ENCODE measurements at regions of chr13 and their contacts with region 1.

Region 1: DNA sequence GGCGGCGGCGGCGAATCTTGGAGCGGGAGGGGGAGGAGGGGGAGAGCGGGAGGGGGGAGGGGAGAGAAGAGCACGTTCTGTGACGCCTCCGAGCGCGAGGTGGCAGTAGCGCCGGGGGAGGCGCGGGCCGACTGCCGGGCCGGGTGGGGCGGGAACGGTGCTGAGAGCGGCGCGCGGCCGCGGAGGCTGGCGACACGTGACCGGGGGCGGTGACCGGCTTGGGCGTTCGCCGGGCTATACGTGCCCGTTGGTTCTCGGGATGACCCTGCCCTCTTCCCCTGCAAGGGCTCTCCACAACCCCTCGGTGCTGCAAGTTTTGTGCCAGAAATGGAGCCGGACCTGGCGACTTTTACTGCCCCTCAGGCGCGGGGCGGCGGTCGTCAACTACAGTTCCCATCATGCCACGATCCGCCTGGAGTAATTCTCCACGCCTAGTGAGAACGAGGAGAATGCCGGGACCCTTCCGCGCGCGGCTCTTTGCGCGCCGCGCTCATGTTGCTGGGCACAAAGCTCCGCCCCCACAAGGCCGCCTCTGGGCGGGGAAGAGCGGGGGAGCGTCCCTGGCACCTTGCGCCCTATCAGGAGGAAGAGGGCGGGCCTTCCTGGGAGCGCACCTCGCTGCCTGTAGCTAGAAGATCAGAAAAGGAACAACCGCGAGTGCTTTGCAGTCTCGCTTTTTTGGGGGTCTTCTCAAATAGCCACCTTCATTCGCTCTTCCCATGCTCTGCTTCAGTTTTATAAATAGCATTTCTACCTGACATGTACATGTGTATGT is at the start of gene KPNA3:
- DNase-seq: peak; percentile 94 to 96 (median 95)
- H3K4me3 ChIP-seq: peak within 1 kb of the TSS; percentile 74 to 80
- H3K4me3 Mint-ChIP-seq: peak within 1 kb of the TSS; percentile 96 to 99 (median 97)
- H3K27ac ChIP-seq: peak within 1 kb of the TSS; percentile 74
- H3K27ac Mint-ChIP-seq: peak within 1 kb of the TSS; percentile 92 to 98 (median 98)
- H3K4me1 ChIP-seq: peaks cover 37% of the 10 kb centered on the region
- H3K4me1 Mint-ChIP-seq: peaks cover 22 to 42% (median 36%) of the 10 kb centered on the region in 4 donors
- H3K27me3 ChIP-seq: no peaks in the 10 kb centered on the region
- H3K27me3 Mint-ChIP-seq: peaks cover 0 to 5% of the 10 kb centered on the region in 2 donors
- total RNA-seq, gene KPNA3: 21.1 to 22.4 TPM

Region 2: DNA sequence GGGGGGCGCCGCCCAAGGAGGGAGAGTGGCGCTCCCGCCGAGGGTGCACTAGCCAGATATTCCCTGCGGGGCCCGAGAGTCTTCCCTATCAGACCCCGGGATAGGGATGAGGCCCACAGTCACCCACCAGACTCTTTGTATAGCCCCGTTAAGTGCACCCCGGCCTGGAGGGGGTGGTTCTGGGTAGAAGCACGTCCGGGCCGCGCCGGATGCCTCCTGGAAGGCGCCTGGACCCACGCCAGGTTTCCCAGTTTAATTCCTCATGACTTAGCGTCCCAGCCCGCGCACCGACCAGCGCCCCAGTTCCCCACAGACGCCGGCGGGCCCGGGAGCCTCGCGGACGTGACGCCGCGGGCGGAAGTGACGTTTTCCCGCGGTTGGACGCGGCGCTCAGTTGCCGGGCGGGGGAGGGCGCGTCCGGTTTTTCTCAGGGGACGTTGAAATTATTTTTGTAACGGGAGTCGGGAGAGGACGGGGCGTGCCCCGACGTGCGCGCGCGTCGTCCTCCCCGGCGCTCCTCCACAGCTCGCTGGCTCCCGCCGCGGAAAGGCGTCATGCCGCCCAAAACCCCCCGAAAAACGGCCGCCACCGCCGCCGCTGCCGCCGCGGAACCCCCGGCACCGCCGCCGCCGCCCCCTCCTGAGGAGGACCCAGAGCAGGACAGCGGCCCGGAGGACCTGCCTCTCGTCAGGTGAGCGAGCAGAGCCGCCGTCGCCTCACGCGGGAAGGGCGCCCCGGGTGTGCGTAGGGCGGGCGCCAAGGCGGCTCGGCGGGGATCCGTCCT is 1489.2 kb before region 1 on chr13 and contains the start of gene RB1:
- CTCF ChIA-PET with region 1: no interaction called
- POLR2A ChIA-PET with region 1: no interaction called
- intact Hi-C with region 1: loop called (anchors 5 kb)
- DNase-seq: peak; percentile 91 to 93 (median 92)
- H3K4me3 ChIP-seq: peak within 1 kb of the TSS; percentile 76 to 94
- H3K4me3 Mint-ChIP-seq: peak within 1 kb of the TSS; percentile 95 to 99 (median 97)
- H3K27ac ChIP-seq: peak within 1 kb of the TSS; percentile 96
- H3K27ac Mint-ChIP-seq: peak within 1 kb of the TSS; percentile 98 to 100 (median 99)
- H3K4me1 ChIP-seq: peaks cover 38% of the 10 kb centered on the region
- H3K4me1 Mint-ChIP-seq: peaks cover 21 to 41% (median 29%) of the 10 kb centered on the region in 4 donors
- H3K27me3 ChIP-seq: no peaks in the 10 kb centered on the region
- H3K27me3 Mint-ChIP-seq: no peaks in the 10 kb centered on the region
- total RNA-seq, gene RB1: 20.0 to 26.0 TPM

Region 3: GRCh38 chr13:49247643-49248621 is 544.8 kb before region 1 on chr13 and contains the start of gene CDADC1:
- CTCF ChIA-PET with region 1: no interaction called
- POLR2A ChIA-PET with region 1: no interaction called
- intact Hi-C with region 1: loop called (anchors 5 kb)
- DNase-seq: peak; percentile 77 to 87 (median 81)
- H3K4me3 ChIP-seq: peak within 1 kb of the TSS; percentile 86 to 89
- H3K4me3 Mint-ChIP-seq: peak within 1 kb of the TSS; percentile 94 to 99 (median 97)
- H3K27ac ChIP-seq: peak within 1 kb of the TSS; percentile 89
- H3K27ac Mint-ChIP-seq: peak within 1 kb of the TSS; percentile 95 to 99 (median 97)
- H3K4me1 ChIP-seq: peaks cover 48% of the 10 kb centered on the region
- H3K4me1 Mint-ChIP-seq: peaks cover 24 to 51% (median 38%) of the 10 kb centered on the region in 4 donors
- H3K27me3 ChIP-seq: no peaks in the 10 kb centered on the region
- H3K27me3 Mint-ChIP-seq: peaks cover 0 to 4% of the 10 kb centered on the region in 2 donors
- total RNA-seq, gene CDADC1: 14.7 to 15.9 TPM

Region 4: DNA sequence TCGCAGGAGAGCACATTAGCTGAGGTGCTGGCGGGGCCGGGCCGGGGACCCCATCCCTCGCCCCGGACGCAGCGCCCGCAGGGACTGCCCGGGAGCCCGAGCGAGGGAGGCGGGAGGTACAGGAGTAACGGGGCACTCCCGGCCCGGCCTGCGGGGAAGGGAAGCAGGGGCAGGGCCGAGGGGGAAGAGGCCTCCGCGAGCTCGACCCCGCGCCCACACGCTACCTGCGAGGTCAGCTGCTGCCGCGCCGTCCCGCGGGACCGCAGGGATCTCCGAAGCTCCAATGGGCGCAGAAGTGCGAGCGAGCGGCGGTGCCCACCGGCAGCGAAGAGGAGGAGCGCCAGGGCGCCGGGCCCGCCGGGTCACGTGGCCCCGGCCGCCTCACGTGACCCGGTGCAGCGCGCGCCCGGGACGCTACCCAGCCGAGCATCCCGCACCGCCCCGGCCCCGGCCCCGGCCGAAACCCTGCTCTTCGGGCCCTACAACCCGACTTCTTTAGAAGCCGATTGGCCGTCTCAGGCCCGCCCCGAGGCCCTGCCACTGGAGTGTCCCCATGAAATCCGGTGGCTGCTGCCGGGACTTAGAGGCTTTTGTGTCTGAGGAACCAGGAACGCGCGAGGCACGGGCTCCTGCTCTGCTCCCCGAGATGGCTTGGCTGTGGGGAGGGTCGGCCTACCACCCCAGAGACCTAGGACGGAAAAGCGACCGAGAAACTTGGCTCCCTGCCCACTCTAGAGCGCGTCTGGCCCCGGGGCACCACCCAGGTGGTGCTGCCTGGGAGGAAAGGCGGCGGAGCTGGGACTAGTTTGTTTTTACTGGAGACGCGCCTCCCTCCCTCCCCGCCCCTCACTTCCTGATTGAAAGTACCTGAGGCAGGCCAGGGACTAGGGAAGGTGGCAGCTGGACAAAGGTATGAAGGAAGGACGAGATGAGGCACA is 207.2 kb before region 1 on chr13 and contains the start of gene RCBTB1:
- CTCF ChIA-PET with region 1: no interaction called
- POLR2A ChIA-PET with region 1: interaction called, 5 read pairs
- intact Hi-C with region 1: loop called (anchors 1 kb)
- DNase-seq: peak; percentile 66 to 77 (median 72)
- H3K4me3 ChIP-seq: peak within 1 kb of the TSS; percentile 64 to 76
- H3K4me3 Mint-ChIP-seq: peak within 1 kb of the TSS; percentile 88 to 99 (median 96)
- H3K27ac ChIP-seq: peak within 1 kb of the TSS; percentile 82
- H3K27ac Mint-ChIP-seq: peak within 1 kb of the TSS; percentile 80 to 96 (median 92)
- H3K4me1 ChIP-seq: peaks cover 21% of the 10 kb centered on the region
- H3K4me1 Mint-ChIP-seq: peaks cover 15 to 52% (median 41%) of the 10 kb centered on the region in 4 donors
- H3K27me3 ChIP-seq: no peaks in the 10 kb centered on the region
- H3K27me3 Mint-ChIP-seq: no peaks in the 10 kb centered on the region
- total RNA-seq, gene RCBTB1: 20.7 to 21.3 TPM

Region 5: GRCh38 chr13:49731766-49732165 is 61.0 kb before region 1 on chr13:
- CTCF ChIA-PET with region 1: no interaction called
- POLR2A ChIA-PET with region 1: no interaction called
- intact Hi-C with region 1: loop called (anchors 5 kb)
- DNase-seq: no peak
- H3K4me3 ChIP-seq: no peak overlapping the region
- H3K4me3 Mint-ChIP-seq: no peak overlapping the region
- H3K27ac ChIP-seq: no peak overlapping the region
- H3K27ac Mint-ChIP-seq: no peak overlapping the region
- H3K4me1 ChIP-seq: no peaks in the 10 kb centered on the region
- H3K4me1 Mint-ChIP-seq: peaks cover 0 to 4% (median 2%) of the 10 kb centered on the region in 4 donors
- H3K27me3 ChIP-seq: no peaks in the 10 kb centered on the region
- H3K27me3 Mint-ChIP-seq: no peaks in the 10 kb centered on the region

Region 6: GRCh38 chr13:49821216-49822030 is 28.7 kb after region 1 on chr13:
- CTCF ChIA-PET with region 1: no interaction called
- POLR2A ChIA-PET with region 1: no interaction called
- intact Hi-C with region 1: no loop called
- DNase-seq: no peak
- H3K4me3 ChIP-seq: no peak overlapping the region
- H3K4me3 Mint-ChIP-seq: no peak overlapping the region
- H3K27ac ChIP-seq: no peak overlapping the region
- H3K27ac Mint-ChIP-seq: no peak overlapping the region
- H3K4me1 ChIP-seq: no peaks in the 10 kb centered on the region
- H3K4me1 Mint-ChIP-seq: peaks cover 0 to 2% (median 0%) of the 10 kb centered on the region in 4 donors
- H3K27me3 ChIP-seq: no peaks in the 10 kb centered on the region
- H3K27me3 Mint-ChIP-seq: peaks cover 8 to 23% of the 10 kb centered on the region in 2 donors

Region 7: GRCh38 chr13:49996951-49997895 is 204.5 kb after region 1 on chr13 and contains the start of gene TRIM13:
- CTCF ChIA-PET with region 1: no interaction called
- POLR2A ChIA-PET with region 1: interaction called, 12 read pairs
- intact Hi-C with region 1: loop called (anchors 1 kb)
- DNase-seq: peak; percentile 81 to 85 (median 84)
- H3K4me3 ChIP-seq: peak within 1 kb of the TSS; percentile 82 to 96
- H3K4me3 Mint-ChIP-seq: peak within 1 kb of the TSS; percentile 89 to 94 (median 90)
- H3K27ac ChIP-seq: peak within 1 kb of the TSS; percentile 83
- H3K27ac Mint-ChIP-seq: peak within 1 kb of the TSS; percentile 84 to 93 (median 91)
- H3K4me1 ChIP-seq: peaks cover 59% of the 10 kb centered on the region
- H3K4me1 Mint-ChIP-seq: peaks cover 30 to 63% (median 43%) of the 10 kb centered on the region in 4 donors
- H3K27me3 ChIP-seq: no peaks in the 10 kb centered on the region
- H3K27me3 Mint-ChIP-seq: no peaks in the 10 kb centered on the region
- total RNA-seq, gene TRIM13: 30.3 to 32.4 TPM

Region 8: GRCh38 chr13:50829896-50830295 is 1037.2 kb after region 1 on chr13:
- CTCF ChIA-PET with region 1: no interaction called
- POLR2A ChIA-PET with region 1: no interaction called
- intact Hi-C with region 1: no loop called
- DNase-seq: no peak
- H3K4me3 ChIP-seq: no peak overlapping the region
- H3K4me3 Mint-ChIP-seq: no peak overlapping the region
- H3K27ac ChIP-seq: no peak overlapping the region
- H3K27ac Mint-ChIP-seq: no peak overlapping the region
- H3K4me1 ChIP-seq: no peaks in the 10 kb centered on the region
- H3K4me1 Mint-ChIP-seq: no peaks in the 10 kb centered on the region
- H3K27me3 ChIP-seq: no peaks in the 10 kb centered on the region
- H3K27me3 Mint-ChIP-seq: peaks cover 0 to 1% of the 10 kb centered on the region in 2 donors

Region 9: GRCh38 chr13:51583875-51584730 is 1791.4 kb after region 1 on chr13 and contains the start of gene WDFY2:
- CTCF ChIA-PET with region 1: no interaction called
- POLR2A ChIA-PET with region 1: no interaction called
- intact Hi-C with region 1: loop called (anchors 2 kb)
- DNase-seq: peak; percentile 99 to 100 (median 100)
- H3K4me3 ChIP-seq: peak within 1 kb of the TSS; percentile 65 to 92
- H3K4me3 Mint-ChIP-seq: peak within 1 kb of the TSS; percentile 97 to 100 (median 99)
- H3K27ac ChIP-seq: peak within 1 kb of the TSS; percentile 88
- H3K27ac Mint-ChIP-seq: peak within 1 kb of the TSS; percentile 96 to 100 (median 100)
- H3K4me1 ChIP-seq: peaks cover 26% of the 10 kb centered on the region
- H3K4me1 Mint-ChIP-seq: peaks cover 27 to 44% (median 35%) of the 10 kb centered on the region in 4 donors
- H3K27me3 ChIP-seq: no peaks in the 10 kb centered on the region
- H3K27me3 Mint-ChIP-seq: no peaks in the 10 kb centered on the region
- total RNA-seq, gene WDFY2: 20.0 to 21.8 TPM

Measured in CD4-positive, alpha-beta memory T cell (primary cell).